ENCODE measurements at regions of chr2 and their contacts with region 1.

Region 1: GRCh38 chr2:237614151-237614720 is 13.2 kb upstream of the LRRFIP1 start:
- DNase-seq: peak; percentile 82
- ATAC-seq: peak; percentile 89
- H3K4me3 Mint-ChIP-seq: 0 out of 2 replicates have a peak overlapping the region, but pooled peaks have one; percentile 2
- H3K27ac Mint-ChIP-seq: peak overlapping the region; percentile 93
- H3K4me1 Mint-ChIP-seq: peaks cover 62% of the 10 kb centered on the region
- H3K27me3 Mint-ChIP-seq: peaks cover 1% of the 10 kb centered on the region; the same call in 1 of the 2 replicates
- CTCF ChIP-seq: peak; percentile 36; the same call in 1 of the 2 replicates

Region 2: DNA sequence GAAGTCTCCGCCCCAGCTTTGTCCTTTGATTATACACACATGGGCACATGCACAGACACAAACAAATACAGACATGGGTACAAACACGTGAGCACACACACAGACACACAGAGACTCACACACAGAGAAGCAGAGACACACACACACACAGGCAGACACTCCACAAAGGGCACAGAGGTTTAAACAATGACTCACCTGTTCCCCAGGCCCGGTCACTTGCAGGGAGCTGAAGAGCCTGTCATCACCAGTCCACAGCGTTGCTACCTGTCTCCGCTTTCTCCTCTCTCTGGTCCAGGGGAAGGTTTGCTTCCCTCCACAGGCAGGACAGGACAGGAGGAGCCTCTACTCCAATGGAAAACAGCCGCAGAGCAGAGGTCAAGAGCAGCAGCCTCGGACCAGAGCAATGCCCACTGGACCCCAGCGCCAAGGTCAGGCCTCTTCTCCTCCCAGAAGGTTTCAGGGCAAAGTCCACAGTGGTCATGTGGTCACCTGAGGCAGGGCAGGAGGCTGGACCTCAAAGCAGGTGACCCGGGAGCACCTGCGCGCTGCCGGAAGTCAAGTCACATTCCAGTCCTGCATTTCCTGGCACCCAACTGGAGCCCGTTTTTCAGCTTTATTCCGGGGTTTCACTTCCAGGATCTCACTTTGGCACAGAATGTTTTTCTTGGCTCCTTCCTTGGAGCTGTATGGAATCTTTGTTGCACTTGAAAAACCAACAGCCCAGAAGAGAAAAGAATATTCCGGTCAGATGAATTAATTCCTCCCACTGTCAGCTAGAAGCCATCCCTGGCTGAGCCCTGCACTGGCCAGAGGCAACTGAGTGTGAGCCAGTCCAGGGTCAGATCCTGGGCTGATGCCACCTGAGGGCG is 23.7 kb before region 1 on chr2 and contains the start of gene RAB17:
- CTCF ChIA-PET with region 1: interaction called, 32 read pairs
- POLR2A ChIA-PET with region 1: interaction called, 7 read pairs
- DNase-seq: peak; percentile 51
- ATAC-seq: peak; percentile 69
- H3K4me3 Mint-ChIP-seq: peak within 1 kb of the TSS; percentile 83
- H3K27ac Mint-ChIP-seq: peak within 1 kb of the TSS; percentile 76
- H3K4me1 Mint-ChIP-seq: peaks cover 88% of the 10 kb centered on the region
- H3K27me3 Mint-ChIP-seq: no peaks in the 10 kb centered on the region
- CTCF ChIP-seq: no peak
- total RNA-seq, gene RAB17: 134 to 140 TPM (median 137 TPM) in 3 replicates

Region 3: DNA sequence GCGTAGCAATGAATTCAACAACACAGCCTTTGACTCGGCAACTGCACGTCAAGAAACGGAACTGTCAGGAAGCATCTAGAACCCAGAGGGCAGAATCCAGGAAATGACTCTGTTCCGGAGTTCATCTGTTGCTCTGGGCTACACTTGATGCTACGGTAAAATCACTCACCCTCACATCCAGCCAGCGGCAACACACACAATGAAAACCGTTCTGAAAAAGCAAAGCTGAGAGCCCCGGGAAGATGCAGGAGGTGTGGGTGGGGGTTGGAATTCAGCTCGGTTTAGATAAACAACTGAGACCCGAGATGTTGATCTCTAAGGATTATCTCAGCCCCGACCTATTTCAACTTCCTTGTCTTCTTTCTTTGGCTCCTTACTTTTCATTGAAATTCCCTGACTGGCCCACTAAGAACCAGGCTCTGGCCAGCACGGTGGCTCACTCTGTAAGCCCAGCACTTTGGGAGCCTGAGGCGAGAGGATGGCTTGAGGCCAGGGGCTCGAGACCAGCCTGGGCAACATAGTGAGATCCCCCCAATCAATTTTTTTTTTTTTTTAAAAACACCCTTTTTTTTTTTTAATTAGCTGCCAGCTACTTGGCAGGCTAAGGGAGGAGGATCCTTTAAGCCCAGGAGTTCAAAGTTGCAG is 10.4 kb before region 1 on chr2:
- CTCF ChIA-PET with region 1: interaction called, 36 read pairs
- POLR2A ChIA-PET with region 1: no interaction called
- DNase-seq: no peak
- ATAC-seq: peak; percentile 28
- H3K4me3 Mint-ChIP-seq: no peak overlapping the region
- H3K27ac Mint-ChIP-seq: peak overlapping the region; percentile 64
- H3K4me1 Mint-ChIP-seq: peaks cover 50% of the 10 kb centered on the region
- H3K27me3 Mint-ChIP-seq: peaks cover 12% of the 10 kb centered on the region
- CTCF ChIP-seq: no peak

Region 4: GRCh38 chr2:237627441-237628246 is 13.4 kb after region 1 on chr2 and contains the start of gene LRRFIP1:
- CTCF ChIA-PET with region 1: interaction called, 12 read pairs
- POLR2A ChIA-PET with region 1: interaction called, 3 read pairs
- DNase-seq: peak; percentile 46
- ATAC-seq: peak; percentile 62
- H3K4me3 Mint-ChIP-seq: peak within 1 kb of the TSS; percentile 83
- H3K27ac Mint-ChIP-seq: no peak within 1 kb of the TSS
- H3K4me1 Mint-ChIP-seq: peaks cover 42% of the 10 kb centered on the region
- H3K27me3 Mint-ChIP-seq: peaks cover 41% of the 10 kb centered on the region
- CTCF ChIP-seq: no peak
- total RNA-seq, gene LRRFIP1: 70.6 to 88.4 TPM (median 71.2 TPM) in 3 replicates